Sciatic nerve (tissue), 2 donors: ENCODE measurements at regions of chr15 and their contacts with region 1.

Region 1: GRCh38 chr15:66386204-66387123 is at the start of gene MAP2K1:
- DNase-seq: peak; percentile 99
- ATAC-seq: peak; percentile 99
- total RNA-seq, gene MAP2K1: 37.2 TPM

Region 2: GRCh38 chr15:66497502-66498455 is 111.3 kb after region 1 on chr15 and contains the start of gene SNAPC5:
- intact Hi-C with region 1: loop called (anchors 5 kb)
- DNase-seq: peak; percentile 97
- ATAC-seq: peak; percentile 98
- total RNA-seq, gene SNAPC5: 20.2 TPM